BJ (cell line): ENCODE measurements at regions of chr17 and their contacts with region 1.

Region 1: DNA sequence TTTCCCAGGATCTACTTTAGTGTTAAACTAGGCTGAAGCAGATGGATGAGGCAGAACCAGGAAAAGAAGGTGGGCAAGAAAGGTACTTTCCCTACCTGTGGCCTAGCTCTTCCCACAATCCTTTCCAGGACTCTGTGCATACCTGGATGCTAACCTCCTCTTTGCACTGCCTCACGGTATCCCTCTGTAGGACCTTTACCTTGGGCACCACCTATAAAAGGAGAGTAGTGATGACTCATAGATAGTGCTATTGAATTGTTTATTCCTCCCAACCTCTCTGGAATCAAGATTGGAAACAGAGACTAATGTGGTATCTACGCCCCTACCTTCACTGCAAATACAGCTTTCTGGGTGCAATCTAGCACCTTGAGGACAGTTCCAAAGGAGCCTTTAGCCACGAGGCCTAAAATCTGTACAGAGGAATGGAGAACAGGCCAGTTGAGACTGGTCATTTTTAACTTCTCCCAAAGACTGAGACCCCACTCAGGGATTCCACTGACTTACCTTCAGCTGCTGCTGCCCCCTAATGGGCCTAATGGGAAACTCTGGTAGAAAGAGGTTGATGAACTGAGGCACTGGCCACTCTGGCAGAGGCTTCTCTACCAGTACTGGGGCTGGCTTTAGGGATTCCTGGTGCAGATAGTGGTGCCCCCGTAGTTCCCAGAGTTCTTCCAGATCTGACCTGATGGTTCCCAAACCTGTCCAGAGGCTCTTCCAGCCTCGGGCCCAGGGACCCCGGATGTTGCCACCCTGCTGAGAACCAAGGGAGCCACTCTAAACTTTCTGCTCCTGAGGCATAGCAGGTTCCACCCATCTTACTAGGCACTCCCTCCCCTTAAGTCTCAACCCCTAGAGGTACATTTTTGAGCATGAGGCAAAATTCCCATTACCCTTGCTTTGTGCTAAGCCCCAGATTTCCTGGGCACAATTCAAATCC is 781 bp downstream of the RSKR start:
- DNase-seq: no peak
- H3K4me3 ChIP-seq: no peak overlapping the region
- H3K27me3 ChIP-seq: no peaks in the 10 kb centered on the region
- CTCF ChIP-seq: peak; percentile 76

Region 2: GRCh38 chr17:28552246-28552999 is 60.8 kb before region 1 on chr17 and contains the start of gene UNC119:
- CTCF ChIA-PET with region 1: interaction called, 24 read pairs
- POLR2A ChIA-PET with region 1: no interaction called
- DNase-seq: no peak
- H3K4me3 ChIP-seq: peak within 1 kb of the TSS; percentile 55
- H3K27me3 ChIP-seq: no peaks in the 10 kb centered on the region
- CTCF ChIP-seq: no peak
- polyA plus RNA-seq, gene UNC119: 82.8 and 150 TPM in 2 replicates

Region 3: GRCh38 chr17:28598799-28599310 is 14.3 kb before region 1 on chr17 and contains the start of gene SPAG5:
- CTCF ChIA-PET with region 1: interaction called, 35 read pairs
- POLR2A ChIA-PET with region 1: no interaction called
- DNase-seq: peak; percentile 57
- H3K4me3 ChIP-seq: peak within 1 kb of the TSS; percentile 65
- H3K27me3 ChIP-seq: no peaks in the 10 kb centered on the region
- CTCF ChIP-seq: no peak
- polyA plus RNA-seq, gene SPAG5: 36.1 and 41.3 TPM in 2 replicates

Region 4: GRCh38 chr17:28623696-28624095 is 10.5 kb after region 1 on chr17:
- CTCF ChIA-PET with region 1: interaction called, 21 read pairs
- POLR2A ChIA-PET with region 1: no interaction called
- DNase-seq: no peak
- H3K4me3 ChIP-seq: no peak overlapping the region
- H3K27me3 ChIP-seq: no peaks in the 10 kb centered on the region
- CTCF ChIP-seq: no peak

Region 5: DNA sequence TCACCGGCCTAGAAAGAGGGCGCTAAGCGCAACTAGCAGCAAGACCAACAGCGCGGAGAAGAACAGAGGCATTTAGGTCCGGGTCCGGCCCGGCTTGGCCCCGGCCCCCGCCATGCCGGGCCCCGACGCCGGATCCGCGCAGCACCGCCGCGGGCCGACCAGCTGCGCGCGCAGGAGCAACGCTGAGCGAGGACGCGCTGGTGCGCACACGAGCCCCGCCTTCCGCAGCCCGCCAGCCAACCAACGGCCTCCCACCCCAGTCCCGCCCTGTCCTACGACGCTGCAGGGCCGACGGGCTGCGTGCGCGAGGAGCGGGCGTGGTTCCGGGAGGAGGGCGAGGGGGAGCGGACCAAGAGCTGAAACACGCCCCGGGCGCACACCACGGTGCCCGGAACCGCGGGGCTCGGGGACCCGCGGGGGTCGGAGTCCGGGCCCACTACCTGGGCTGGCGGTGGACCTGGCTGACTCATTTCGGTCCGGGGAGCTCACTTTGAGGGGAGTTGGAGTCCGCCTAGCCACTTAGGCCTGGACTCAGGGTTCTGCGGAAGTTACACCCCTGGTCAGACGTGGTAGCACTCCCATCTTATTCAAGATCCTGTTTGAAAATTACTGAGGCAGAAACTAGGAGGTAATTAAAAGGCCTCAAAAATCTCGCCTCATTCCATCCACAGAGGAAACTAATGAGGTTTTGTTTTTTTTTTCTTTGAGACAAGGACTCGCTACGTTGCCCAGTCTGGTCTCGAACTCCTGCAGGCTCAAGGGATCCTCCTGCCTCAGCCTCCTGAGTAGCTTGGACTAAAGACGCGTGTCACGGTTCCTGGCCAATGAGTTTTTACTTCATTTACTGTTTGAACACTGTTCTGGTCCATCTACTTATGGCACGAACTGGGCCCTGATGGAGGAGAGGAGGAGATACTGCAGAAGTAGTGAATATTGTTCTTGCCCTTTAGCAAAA is 32.1 kb after region 1 on chr17 and contains the start of gene BLTP2:
- CTCF ChIA-PET with region 1: interaction called, 27 read pairs
- POLR2A ChIA-PET with region 1: no interaction called
- DNase-seq: peak; percentile 65
- H3K4me3 ChIP-seq: peak within 1 kb of the TSS; percentile 90
- H3K27me3 ChIP-seq: no peaks in the 10 kb centered on the region
- CTCF ChIP-seq: no peak
- polyA plus RNA-seq, gene BLTP2: 142 and 206 TPM in 2 replicates

Region 6: GRCh38 chr17:28925912-28926365 is 312.7 kb after region 1 on chr17:
- CTCF ChIA-PET with region 1: no interaction called
- POLR2A ChIA-PET with region 1: no interaction called
- DNase-seq: peak; percentile 69
- H3K4me3 ChIP-seq: no peak overlapping the region
- H3K27me3 ChIP-seq: no peaks in the 10 kb centered on the region
- CTCF ChIP-seq: no peak